ENCODE measurements at regions of chr19 and their contacts with region 1.

Region 1: DNA sequence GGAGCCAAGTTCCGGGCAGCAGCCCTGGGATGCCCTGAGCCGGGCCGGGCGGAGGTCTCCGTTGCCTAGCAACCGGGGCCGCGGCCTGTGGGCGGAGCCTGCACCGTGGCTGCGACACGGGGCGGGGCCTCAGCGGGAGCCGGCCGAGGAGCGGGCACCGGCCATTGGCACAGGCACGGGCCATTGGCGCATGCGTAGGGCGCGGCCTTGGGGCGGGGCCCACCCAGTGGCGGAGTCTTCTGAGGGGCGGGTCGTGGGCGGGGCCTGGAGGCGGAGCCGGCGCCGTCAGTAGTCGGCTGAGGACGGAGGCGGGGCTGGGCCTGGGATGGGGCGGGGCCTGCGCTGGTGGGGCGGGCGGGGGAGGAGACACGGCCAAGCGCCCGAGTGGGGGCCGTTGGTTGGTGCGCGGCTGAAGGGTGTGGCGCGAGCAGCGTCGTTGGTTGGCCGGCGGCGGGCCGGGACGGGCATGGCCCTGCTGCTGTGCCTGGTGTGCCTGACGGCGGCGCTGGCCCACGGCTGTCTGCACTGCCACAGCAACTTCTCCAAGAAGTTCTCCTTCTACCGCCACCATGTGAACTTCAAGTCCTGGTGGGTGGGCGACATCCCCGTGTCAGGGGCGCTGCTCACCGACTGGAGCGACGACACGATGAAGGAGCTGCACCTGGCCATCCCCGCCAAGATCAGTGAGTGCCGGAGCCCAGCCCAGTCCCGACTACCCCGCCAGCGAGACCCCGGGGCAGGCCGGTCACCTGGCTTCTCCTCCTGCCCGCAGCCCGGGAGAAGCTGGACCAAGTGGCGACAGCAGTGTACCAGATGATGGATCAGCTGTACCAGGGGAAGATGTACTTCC is at the start of gene IZUMO4:
- DNase-seq: peak; percentile 99 to 100 (median 100)
- ATAC-seq: peak; percentile 80 to 84
- H3K4me3 Mint-ChIP-seq: peak within 1 kb of the TSS; percentile 94 to 99 (median 96)
- H3K27ac Mint-ChIP-seq: peak within 1 kb of the TSS; percentile 82 to 99 (median 96)
- H3K4me1 Mint-ChIP-seq: peaks cover 13 to 36% (median 31%) of the 10 kb centered on the region in 4 donors
- H3K27me3 Mint-ChIP-seq: peaks cover 0 to 1% (median 0%) of the 10 kb centered on the region in 5 donors
- polyA plus RNA-seq, gene IZUMO4: 0.26 to 1.4 (median 0.85) TPM

Region 2: DNA sequence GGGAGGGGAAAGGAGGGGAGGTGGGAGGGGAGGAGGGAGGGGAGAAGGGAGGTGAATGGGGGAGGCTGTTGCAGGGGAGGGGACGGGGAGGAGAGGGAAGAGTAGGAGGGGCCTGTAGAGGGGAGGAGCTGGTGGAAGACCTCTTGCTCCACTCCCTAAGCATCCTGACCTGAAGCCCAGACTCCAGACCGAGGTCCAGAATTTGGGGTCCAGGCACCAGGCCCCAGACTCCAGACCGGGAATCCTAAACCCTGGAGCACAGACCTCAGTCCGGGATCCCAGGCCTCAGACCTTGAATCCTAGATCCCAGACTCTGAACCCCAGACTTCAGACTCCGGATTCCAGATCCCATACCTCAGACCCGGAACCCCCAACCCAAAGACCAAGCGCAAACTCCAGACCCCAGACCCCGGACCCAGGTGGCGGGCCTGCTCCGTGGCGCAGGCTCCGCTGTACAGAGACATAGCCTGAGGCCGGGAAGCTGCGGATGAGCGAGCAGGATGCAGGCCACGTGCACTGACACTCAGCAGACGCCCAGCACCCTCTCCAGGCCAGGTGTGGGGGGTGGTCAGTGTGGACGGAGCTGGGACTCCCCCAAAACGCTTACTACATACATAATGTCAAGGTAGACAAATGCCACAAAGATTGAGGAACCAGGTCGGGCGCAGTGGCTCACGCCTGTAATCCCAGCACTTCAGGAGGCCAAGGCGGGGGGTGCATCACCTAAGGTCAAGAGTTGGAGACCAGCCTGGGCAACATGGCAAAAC is 80.5 kb before region 1 on chr19:
- POLR2A ChIA-PET with region 1: interaction called, 11 read pairs
- DNase-seq: peak in 7 of 10 donors; percentile 37 to 85 (median 51)
- ATAC-seq: peak; percentile 33 to 50
- H3K4me3 Mint-ChIP-seq: peak overlapping the region; percentile 47 to 75 (median 56)
- H3K27ac Mint-ChIP-seq: peak overlapping the region in 9 of 10 donors; percentile 9 to 85 (median 68)
- H3K4me1 Mint-ChIP-seq: peaks cover 8 to 35% (median 26%) of the 10 kb centered on the region in 4 donors
- H3K27me3 Mint-ChIP-seq: no peaks in the 10 kb centered on the region

Region 3: GRCh38 chr19:2041683-2042484 is 54.8 kb before region 1 on chr19:
- POLR2A ChIA-PET with region 1: interaction called, 72 read pairs
- DNase-seq: peak; percentile 97 to 100 (median 99)
- ATAC-seq: peak; percentile 83 to 85
- H3K4me3 Mint-ChIP-seq: peak overlapping the region in 9 of 10 donors; percentile 56 to 80 (median 63)
- H3K27ac Mint-ChIP-seq: peak overlapping the region in 9 of 10 donors; percentile 48 to 98 (median 95)
- H3K4me1 Mint-ChIP-seq: peaks cover 9 to 44% (median 42%) of the 10 kb centered on the region in 4 donors
- H3K27me3 Mint-ChIP-seq: no peaks in the 10 kb centered on the region

Region 4: DNA sequence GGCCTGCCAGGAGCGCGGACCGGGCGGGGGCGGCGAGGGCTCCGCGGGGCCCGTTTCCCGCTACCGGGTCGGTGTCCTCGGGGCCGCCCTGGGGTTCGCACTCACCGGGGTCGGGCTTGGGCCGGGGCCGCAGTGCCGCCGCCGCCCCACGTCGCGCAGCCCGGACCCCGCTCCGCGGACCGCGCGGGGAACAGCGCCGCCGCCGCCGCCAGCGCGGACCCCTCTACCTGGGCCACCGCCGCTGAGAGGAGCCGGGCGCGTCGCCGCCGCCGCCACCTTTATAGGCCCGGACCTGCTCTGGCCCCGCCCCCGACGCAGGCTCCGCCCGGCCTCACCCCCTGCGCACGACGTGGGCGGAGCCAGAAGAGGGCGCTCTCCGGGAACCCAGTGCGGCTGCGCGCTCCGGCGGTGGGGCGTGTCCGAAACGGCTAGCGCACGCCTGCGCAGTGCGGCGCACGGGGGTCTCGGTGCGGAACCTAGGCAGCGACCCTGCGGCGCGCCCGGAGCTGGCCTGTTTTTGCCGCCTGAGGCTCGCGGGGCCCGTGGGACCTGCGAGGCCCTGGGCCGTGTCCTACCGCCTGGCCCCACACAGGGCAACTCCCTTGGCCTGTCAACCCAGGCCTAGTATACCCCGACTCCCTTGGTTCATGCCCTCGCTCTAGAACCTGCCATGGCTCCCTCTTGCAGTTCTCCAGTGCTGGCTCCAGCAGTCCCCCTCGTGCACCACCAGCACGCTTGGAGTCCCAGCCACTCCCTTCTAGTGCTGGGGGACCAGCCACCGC is 45.5 kb before region 1 on chr19 and contains the start of gene MKNK2:
- POLR2A ChIA-PET with region 1: interaction called, 72 read pairs
- DNase-seq: peak; percentile 85 to 99 (median 96)
- ATAC-seq: peak; percentile 76
- H3K4me3 Mint-ChIP-seq: peak within 1 kb of the TSS; percentile 80 to 92 (median 88)
- H3K27ac Mint-ChIP-seq: peak within 1 kb of the TSS; percentile 83 to 97 (median 96)
- H3K4me1 Mint-ChIP-seq: peaks cover 19 to 63% (median 56%) of the 10 kb centered on the region in 4 donors
- H3K27me3 Mint-ChIP-seq: no peaks in the 10 kb centered on the region
- polyA plus RNA-seq, gene MKNK2: 26.1 to 47.1 (median 30.2) TPM

Region 5: DNA sequence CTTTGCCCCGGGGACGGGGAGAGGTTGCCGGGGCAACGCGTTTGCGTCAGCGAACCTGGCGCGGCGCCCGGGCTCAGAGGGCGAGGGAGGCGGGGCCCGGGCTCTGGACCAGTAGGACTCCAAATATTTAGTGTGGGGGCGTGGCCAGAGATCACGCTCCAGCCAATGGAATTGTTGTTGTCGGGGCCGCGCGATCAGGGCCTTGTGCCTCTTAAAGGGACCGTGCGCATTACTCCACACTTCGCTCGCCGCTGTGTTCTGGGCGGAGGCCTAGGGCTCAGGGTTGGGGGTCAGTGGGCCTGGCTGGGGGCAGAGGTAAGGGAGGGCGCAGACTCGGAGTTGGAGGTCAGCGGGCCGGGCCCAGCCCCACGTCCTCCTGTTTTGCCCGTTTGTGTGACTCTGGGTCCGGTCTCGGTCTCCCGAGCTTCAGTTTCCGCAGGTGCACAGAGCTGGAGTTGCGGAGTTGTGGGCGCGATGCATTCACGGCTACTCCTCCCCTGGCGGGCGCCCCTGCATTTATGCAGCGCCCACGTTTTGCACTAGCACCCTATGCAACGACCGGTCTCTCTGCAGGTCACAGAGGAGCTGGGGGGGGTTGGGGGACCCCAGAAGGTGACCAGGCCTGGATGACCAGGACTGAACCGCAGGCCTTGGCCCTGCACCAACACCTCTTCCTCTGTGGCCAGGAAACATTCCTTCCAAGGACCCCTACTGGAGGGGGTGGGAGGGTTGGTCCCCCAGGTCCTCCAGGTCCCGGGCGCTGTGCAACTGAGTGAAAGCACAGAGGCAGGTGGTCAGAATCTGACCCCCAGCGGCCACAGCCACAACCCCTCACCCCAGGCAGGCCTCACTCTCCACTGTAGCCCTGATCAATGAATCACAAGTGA is 35.0 kb before region 1 on chr19:
- POLR2A ChIA-PET with region 1: interaction called, 33 read pairs
- DNase-seq: peak; percentile 99 to 100 (median 100)
- ATAC-seq: peak; percentile 89 to 93
- H3K4me3 Mint-ChIP-seq: peak overlapping the region; percentile 86 to 96 (median 92)
- H3K27ac Mint-ChIP-seq: peak overlapping the region; percentile 87 to 98 (median 98)
- H3K4me1 Mint-ChIP-seq: peaks cover 8 to 56% (median 38%) of the 10 kb centered on the region in 4 donors
- H3K27me3 Mint-ChIP-seq: no peaks in the 10 kb centered on the region

Region 6: GRCh38 chr19:2070436-2070827 is 26.3 kb before region 1 on chr19:
- POLR2A ChIA-PET with region 1: interaction called, 45 read pairs
- DNase-seq: no peak
- ATAC-seq: peak in 1 of 2 donors; percentile 8
- H3K4me3 Mint-ChIP-seq: no peak overlapping the region
- H3K27ac Mint-ChIP-seq: peak overlapping the region in 5 of 10 donors; percentile 56 to 91 (median 87)
- H3K4me1 Mint-ChIP-seq: peaks cover 10 to 46% (median 29%) of the 10 kb centered on the region in 4 donors
- H3K27me3 Mint-ChIP-seq: no peaks in the 10 kb centered on the region

Region 7: GRCh38 chr19:2084993-2085720 is 11.5 kb before region 1 on chr19:
- POLR2A ChIA-PET with region 1: interaction called, 173 read pairs
- DNase-seq: peak; percentile 72 to 99 (median 96)
- ATAC-seq: peak; percentile 64 to 78
- H3K4me3 Mint-ChIP-seq: peak overlapping the region; percentile 94 to 100 (median 98)
- H3K27ac Mint-ChIP-seq: peak overlapping the region; percentile 94 to 100 (median 99)
- H3K4me1 Mint-ChIP-seq: peaks cover 42 to 84% (median 75%) of the 10 kb centered on the region in 4 donors
- H3K27me3 Mint-ChIP-seq: peaks cover 0 to 2% (median 0%) of the 10 kb centered on the region in 5 donors

Measured in naive thymus-derived CD8-positive, alpha-beta T cell (primary cell).